AG04449 (cell line): ENCODE measurements at regions of chr20 and their contacts with region 1.

Region 1: DNA sequence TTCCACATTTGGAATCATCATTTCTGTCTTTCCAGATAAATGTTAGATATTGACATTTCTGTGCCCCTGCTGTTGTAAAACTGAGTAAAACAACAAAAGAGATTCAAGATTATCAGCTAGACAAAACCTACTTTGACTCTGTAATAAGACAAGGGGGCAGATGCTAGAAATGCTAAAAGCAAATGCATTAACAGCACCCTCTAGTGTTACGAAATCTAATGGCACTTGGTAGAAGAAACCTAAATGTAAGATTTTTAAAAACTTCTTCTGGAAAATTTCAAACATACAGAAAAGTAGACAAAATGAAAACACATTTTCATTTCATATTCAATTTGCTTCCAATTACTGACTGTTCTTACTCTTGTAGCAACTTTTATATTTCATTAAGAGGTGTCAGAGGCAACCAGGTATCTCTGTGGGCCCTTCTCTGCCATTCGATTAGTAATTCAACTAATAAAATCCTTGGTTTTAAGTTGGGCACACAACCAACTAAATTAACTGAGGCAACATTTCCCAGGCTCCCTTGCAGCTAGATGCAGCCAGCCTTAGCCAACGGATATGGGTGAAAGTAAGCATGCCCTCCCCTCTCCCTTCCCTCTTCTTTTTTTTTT is 45.0 kb downstream of the SLC23A2 start:
- DNase-seq: no peak
- H3K4me3 ChIP-seq: no peak overlapping the region
- CTCF ChIP-seq: peak; percentile 64

Region 2: DNA sequence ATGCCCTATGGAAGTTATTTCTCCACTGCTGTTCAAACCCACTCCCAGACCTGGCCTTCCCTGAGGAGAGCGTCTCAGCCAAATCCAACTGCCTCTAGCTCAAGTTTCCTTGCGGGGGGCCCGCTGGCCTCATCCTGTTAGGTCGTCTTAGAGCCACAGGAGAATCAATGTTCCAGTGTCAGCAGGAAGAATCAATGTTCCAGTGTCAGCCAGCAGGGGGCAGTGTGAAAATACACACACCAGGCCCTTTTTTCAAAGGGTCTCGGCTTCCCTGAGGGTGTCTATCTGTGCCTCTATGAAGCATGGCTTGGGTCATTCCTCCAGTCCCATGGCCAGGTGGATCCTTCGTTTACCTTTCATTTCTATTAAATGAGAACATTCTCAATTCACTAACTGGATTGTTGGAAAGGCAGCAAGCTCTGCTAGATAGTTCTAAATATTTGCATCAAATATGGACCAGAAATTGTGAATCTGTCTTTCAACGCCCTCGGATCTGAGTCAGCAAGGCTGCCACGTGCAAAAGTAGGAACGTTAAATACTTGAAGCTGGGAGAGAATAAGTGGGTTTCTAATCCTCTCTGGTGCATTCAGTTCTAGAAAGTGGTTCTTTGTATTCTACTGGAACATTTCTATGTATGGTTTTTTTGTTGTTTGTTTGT is 215.4 kb before region 1 on chr20:
- CTCF ChIA-PET with region 1: interaction called, 32 read pairs
- POLR2A ChIA-PET with region 1: no interaction called
- DNase-seq: no peak
- H3K4me3 ChIP-seq: no peak overlapping the region
- CTCF ChIP-seq: peak; percentile 67

Region 3: GRCh38 chr20:4916971-4917881 is 39.1 kb before region 1 on chr20:
- CTCF ChIA-PET with region 1: interaction called, 10 read pairs
- POLR2A ChIA-PET with region 1: no interaction called
- DNase-seq: peak; percentile 14
- H3K4me3 ChIP-seq: no peak overlapping the region
- CTCF ChIP-seq: no peak

Region 4: GRCh38 chr20:4929686-4930397 is 26.5 kb before region 1 on chr20:
- CTCF ChIA-PET with region 1: interaction called, 19 read pairs
- POLR2A ChIA-PET with region 1: no interaction called
- DNase-seq: no peak
- H3K4me3 ChIP-seq: no peak overlapping the region
- CTCF ChIP-seq: no peak

Region 5: DNA sequence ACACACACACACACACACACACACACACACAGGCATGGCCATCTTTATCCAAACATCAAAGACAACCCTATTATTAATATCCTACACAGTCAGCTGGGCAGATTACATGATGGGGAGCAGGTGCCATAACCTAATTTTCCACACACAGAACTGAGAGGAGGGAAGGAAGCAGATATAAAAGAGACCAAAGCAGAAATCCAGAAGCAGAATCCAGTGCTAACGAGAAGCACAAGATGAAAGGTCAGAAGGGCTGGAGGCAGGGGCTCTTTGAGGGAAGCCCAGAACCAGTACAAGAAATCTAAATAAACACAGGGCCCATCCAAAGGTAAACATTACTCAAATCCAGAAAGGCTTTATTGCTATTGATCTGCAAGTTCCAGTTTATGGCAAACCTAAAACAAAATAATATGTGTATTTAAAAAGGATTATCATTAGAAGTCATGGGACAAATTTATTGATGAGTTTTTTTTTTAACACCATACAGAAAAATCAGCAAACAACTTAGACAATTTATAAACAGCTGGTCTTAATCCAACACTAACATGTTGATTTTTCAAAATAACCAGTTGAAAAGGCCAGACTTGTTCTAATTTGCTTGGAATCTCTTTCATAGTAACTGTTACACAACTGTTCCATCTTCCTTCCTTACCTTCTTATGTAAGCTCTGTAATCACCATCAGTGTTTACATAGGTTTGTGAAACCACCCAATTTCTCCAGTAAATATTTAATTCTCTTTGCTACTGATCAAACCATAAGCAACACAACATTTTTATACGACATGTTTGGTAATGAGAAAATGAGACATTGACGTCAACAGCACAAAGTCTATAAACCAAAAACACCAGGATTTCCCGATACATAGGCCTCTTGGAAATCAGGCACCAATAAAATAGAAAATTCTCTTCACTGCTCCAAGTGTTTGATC is 10.8 kb after region 1 on chr20:
- CTCF ChIA-PET with region 1: interaction called, 46 read pairs
- POLR2A ChIA-PET with region 1: no interaction called
- DNase-seq: no peak
- H3K4me3 ChIP-seq: no peak overlapping the region
- CTCF ChIP-seq: no peak

Region 6: GRCh38 chr20:5658912-5659345 is 702.6 kb after region 1 on chr20:
- CTCF ChIA-PET with region 1: no interaction called
- POLR2A ChIA-PET with region 1: no interaction called
- DNase-seq: no peak
- H3K4me3 ChIP-seq: no peak overlapping the region
- CTCF ChIP-seq: no peak